HEK293 (cell line): ENCODE measurements at regions of chr1 and their contacts with region 1.

Region 1: DNA sequence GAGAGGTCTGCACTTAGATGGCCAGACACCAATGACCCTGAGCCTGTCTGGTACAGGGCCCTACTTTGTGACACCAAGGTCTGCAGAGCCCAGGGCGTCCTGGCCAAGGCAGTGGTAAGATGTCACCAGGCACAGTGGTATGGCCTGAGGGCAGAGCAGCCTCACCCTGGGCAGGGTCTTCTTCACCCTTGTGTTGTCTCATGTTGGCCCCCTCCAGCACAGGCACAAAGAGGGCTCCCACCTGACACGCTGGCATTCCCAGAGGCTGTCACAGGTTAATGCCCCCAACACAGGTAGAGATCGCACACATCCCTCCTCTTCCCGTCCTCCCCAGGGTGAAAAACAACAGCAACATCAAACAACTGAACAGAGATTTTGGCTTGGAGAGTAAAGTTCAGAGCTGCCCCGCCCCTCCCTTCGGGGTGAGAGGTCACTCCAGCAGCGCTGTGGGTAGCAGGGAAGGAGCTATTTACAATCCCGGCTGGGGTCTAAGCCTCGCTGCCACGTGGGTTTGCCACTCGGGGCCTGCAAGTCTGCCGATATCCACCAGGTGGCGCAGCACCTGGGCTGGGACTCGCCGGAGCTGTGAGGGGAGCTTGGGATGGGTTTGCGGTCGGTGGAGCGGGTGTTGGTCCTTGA is 12.6 kb downstream of the EFNA3 start:
- H3K4me3 ChIP-seq: no peak overlapping the region
- H3K27ac ChIP-seq: no peak overlapping the region
- H3K4me1 ChIP-seq: peaks cover 13% of the 10 kb centered on the region
- CTCF ChIP-seq: peak; percentile 92

Region 2: DNA sequence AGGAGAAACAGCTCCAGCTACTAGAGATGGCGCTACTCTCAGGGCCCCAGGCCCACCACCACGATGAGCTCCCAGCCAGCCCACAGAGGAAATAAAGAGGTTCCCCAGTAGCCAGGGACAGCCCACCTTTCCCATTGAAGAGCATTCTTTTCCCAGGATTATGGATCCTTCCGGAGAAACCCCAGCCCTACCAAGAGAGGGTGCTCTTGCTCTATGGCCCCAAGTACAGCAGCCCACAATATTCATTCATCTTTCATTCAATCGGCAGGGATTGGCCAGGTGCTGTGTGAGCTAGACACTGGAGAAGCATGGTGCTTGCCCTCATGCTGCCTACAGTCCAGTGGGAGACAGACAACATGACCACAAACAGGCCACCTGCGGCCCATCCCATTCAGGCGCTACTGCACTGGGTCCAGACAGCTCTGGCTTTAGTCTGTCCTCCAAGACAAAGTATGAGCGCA is 184.5 kb before region 1 on chr1:
- CTCF ChIA-PET with region 1: no interaction called
- POLR2A ChIA-PET with region 1: no interaction called
- H3K4me3 ChIP-seq: no peak overlapping the region
- H3K27ac ChIP-seq: no peak overlapping the region
- H3K4me1 ChIP-seq: no peaks in the 10 kb centered on the region
- CTCF ChIP-seq: no peak

Region 3: DNA sequence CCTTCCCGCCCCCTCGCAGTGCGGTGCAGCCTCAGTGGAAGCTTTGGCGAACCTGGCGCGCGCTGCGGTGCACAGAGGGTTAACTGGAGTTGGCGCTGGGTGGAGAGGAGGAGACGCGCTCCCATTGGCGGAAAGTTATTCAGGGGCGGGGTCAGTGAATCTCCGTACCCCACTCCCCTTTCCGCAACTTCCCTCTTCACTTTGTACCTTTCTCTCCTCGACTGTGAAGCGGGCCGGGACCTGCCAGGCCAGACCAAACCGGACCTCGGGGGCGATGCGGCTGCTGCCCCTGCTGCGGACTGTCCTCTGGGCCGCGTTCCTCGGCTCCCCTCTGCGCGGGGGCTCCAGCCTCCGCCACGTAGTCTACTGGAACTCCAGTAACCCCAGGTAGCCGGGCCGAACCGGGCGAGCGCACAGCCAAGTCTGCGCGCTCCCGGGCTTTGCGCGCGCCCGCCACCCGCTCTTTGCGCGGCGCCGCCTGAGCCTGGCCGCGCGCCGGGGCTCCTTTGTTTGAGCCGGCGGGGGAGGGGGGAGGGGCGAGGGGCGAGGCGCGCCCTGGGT is 27.6 kb before region 1 on chr1 and contains the start of gene EFNA4:
- CTCF ChIA-PET with region 1: interaction called, 117 read pairs
- POLR2A ChIA-PET with region 1: no interaction called
- H3K4me3 ChIP-seq: peak within 1 kb of the TSS; percentile 88
- H3K27ac ChIP-seq: peak within 1 kb of the TSS; percentile 64; the same call in 1 of the 2 replicates
- H3K4me1 ChIP-seq: no peaks in the 10 kb centered on the region; the same call in none of the 2 replicates
- CTCF ChIP-seq: no peak

Region 4: GRCh38 chr1:155106850-155107249 is 15.7 kb after region 1 on chr1:
- CTCF ChIA-PET with region 1: interaction called, 11 read pairs
- POLR2A ChIA-PET with region 1: no interaction called
- H3K4me3 ChIP-seq: no peak overlapping the region
- H3K27ac ChIP-seq: no peak overlapping the region
- H3K4me1 ChIP-seq: 0 out of 2 replicates have a peak, but pooled peaks cover 3% of the 10 kb centered on the region
- CTCF ChIP-seq: no peak

Region 5: DNA sequence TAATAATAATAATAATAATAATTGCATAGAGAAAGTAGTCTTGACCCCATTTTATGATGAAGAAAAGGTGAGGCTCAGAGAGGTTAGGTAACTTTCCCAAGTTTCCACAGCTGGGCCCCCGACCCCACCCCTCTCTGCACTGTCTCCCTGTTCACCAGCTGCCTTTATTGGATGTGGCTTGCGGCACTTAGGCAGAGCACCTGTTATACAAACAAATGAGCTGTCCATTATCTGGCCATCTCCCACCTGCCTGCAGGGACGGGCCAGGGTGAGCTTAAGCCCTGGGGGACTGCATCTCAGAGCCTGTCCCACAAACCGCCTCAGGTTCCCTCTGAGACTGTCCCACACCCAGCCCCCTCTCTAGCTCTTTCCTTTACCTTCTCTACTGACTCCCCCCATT is 26.4 kb after region 1 on chr1:
- CTCF ChIA-PET with region 1: interaction called, 30 read pairs
- POLR2A ChIA-PET with region 1: no interaction called
- H3K4me3 ChIP-seq: no peak overlapping the region
- H3K27ac ChIP-seq: no peak overlapping the region
- H3K4me1 ChIP-seq: no peaks in the 10 kb centered on the region
- CTCF ChIP-seq: no peak

Region 6: DNA sequence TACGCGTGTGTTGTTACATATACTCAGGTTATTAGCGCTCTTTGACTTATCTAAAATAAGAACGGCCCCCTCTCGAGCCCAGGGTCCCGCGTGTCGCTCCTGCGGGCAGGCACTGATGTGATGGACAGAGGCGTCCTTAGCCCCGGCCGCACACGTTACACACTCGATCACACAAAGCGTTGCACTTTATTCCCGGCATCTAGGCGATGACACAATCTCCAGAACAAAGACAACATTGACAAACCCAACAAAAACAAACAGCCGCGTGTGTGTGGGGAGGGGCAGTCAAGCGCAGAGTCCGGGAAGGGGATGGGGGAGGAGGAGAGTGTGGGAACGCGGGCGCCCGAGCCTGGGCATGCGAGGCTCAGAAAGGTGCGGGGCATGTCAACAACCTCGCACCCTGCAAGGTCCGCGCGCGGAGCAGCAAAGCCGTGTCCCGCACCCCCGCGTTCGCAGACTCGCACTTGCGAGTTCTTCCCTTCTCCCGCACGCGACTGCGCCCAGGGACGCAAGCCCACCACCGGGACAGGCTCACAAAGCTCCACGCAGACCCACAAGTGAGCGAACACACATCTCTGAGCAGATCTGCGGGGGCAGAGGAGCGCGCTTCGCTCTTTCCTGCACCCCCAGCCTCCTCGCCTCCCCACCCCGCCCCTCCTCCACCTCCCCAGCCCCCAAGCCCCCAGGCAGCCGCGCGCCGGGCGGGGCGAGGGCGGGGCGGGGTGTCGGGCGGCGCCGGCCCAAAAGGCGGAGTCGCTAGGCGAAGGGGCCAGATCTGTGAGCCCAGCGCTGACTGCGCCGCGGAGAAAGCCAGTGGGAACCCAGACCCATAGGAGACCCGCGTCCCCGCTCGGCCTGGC is 36.1 kb after region 1 on chr1 and contains the start of gene EFNA1:
- CTCF ChIA-PET with region 1: interaction called, 54 read pairs
- POLR2A ChIA-PET with region 1: interaction called, 8 read pairs
- H3K4me3 ChIP-seq: peak within 1 kb of the TSS; percentile 62
- H3K27ac ChIP-seq: peak within 1 kb of the TSS; percentile 75
- H3K4me1 ChIP-seq: peaks cover 21% of the 10 kb centered on the region
- CTCF ChIP-seq: no peak; the same call in 1 of the 2 replicates

Region 7: GRCh38 chr1:155135415-155136028 is 44.3 kb after region 1 on chr1 and contains the start of gene SLC50A1:
- CTCF ChIA-PET with region 1: interaction called, 54 read pairs
- POLR2A ChIA-PET with region 1: interaction called, 5 read pairs
- H3K4me3 ChIP-seq: peak within 1 kb of the TSS; percentile 58
- H3K27ac ChIP-seq: peak within 1 kb of the TSS; percentile 88
- H3K4me1 ChIP-seq: no peaks in the 10 kb centered on the region
- CTCF ChIP-seq: peak; percentile 45; the same call in 1 of the 2 replicates

Region 8: DNA sequence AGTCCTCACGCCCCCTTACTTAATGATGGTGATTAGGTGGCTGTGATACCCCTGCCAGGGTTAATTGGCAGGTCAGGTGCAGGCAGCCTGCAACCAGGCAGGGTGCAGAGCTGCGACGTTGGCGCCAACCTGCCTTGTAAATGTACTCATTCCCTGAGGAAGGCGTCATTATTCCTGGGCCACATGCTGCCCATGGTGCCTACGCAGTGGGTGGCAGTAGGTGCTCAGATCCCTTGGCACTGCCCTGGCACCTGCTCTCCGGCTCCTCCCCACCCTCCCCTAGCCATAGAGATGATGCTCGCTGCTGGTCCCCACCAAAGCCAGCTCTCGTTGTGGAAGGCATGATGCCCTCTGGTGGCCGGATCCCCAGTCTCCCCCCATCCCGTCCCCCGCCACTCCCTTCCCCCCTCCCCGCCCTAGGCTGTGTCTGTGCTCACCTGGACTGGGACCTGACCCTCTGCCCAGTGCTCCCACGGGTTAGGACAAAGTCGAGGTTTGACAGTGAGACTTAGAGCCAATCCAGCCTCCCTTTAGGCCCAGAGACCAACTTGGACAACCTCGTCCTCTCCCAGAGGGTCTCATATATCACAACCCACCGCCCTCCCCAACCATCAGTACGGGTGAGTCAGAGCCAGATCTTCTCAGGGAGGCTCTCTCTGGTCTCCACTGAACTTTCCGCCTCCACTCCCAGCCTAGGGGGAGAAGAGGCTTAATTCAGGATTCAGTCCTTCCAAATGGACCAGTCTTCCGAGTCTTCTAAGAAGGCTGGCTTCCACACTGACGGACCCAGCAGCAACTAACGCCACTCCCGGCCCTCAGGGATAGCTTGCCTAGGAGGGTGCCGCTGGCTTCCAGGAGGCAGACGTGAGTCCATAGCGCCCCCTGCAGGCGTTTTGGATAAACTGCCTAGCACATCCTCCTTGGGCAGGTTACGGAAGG is 76.2 kb after region 1 on chr1:
- CTCF ChIA-PET with region 1: interaction called, 439 read pairs
- POLR2A ChIA-PET with region 1: interaction called, 17 read pairs
- H3K4me3 ChIP-seq: peak overlapping the region; percentile 35
- H3K27ac ChIP-seq: no peak overlapping the region; the same call in 1 of the 2 replicates
- H3K4me1 ChIP-seq: no peaks in the 10 kb centered on the region; the same call in 1 of the 2 replicates
- CTCF ChIP-seq: peak; percentile 92

Region 9: GRCh38 chr1:155244368-155245162 is 153.4 kb after region 1 on chr1:
- CTCF ChIA-PET with region 1: no interaction called
- POLR2A ChIA-PET with region 1: no interaction called
- H3K4me3 ChIP-seq: peak overlapping the region; percentile 48
- H3K27ac ChIP-seq: peak overlapping the region; percentile 56
- H3K4me1 ChIP-seq: peaks cover 5% of the 10 kb centered on the region; the same call in 1 of the 2 replicates
- CTCF ChIP-seq: peak; percentile 87; the same call in 1 of the 2 replicates